ENCODE measurements at regions of chr3 and their contacts with region 1.

Region 1: GRCh38 chr3:181326637-181327223 is 337.2 kb upstream of the DNAJC19 start:
- DNase-seq: no peak
- ATAC-seq: peak in 2 of 8 donors; percentile 42 to 46
- H3K4me3 ChIP-seq: no peak overlapping the region
- H3K27ac ChIP-seq: no peak overlapping the region
- H3K4me1 ChIP-seq: no peaks in the 10 kb centered on the region
- H3K27me3 ChIP-seq: peaks cover 0 to 3% (median 0%) of the 10 kb centered on the region in 7 donors
- CTCF ChIP-seq: peak; percentile 26 to 73 (median 62)

Region 2: DNA sequence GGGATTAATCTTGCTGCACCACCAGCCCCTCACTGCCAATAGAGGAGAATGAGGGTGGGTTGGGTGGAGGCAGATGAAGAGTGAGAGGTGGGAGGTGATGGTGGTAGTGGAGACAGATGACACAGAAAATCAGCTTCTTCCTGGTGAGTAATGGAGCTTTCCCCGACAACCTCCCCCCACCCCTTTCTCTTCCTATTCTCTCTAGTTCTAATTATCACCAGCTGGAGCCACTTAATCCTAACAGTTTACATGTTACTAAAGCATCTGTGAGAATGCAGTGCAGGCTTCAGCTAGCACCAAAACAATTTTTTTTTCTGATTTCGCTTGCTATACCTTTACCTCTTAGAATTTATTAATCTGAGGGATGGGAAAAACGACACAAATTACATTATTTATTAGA is 221.1 kb before region 1 on chr3:
- intact Hi-C with region 1: no loop called
- DNase-seq: no peak
- ATAC-seq: no peak
- H3K4me3 ChIP-seq: no peak overlapping the region
- H3K27ac ChIP-seq: no peak overlapping the region
- H3K4me1 ChIP-seq: no peaks in the 10 kb centered on the region
- H3K27me3 ChIP-seq: no peaks in the 10 kb centered on the region
- CTCF ChIP-seq: no peak

Region 3: GRCh38 chr3:181176601-181177000 is 150.1 kb before region 1 on chr3:
- intact Hi-C with region 1: no loop called
- DNase-seq: peak; percentile 34 to 49
- ATAC-seq: peak in 1 of 8 donors; percentile 48
- H3K4me3 ChIP-seq: no peak overlapping the region
- H3K27ac ChIP-seq: no peak overlapping the region
- H3K4me1 ChIP-seq: no peaks in the 10 kb centered on the region
- H3K27me3 ChIP-seq: no peaks in the 10 kb centered on the region
- CTCF ChIP-seq: peak in 8 of 9 donors; percentile 40 to 70 (median 62)

Region 4: GRCh38 chr3:181457190-181457589 is 130.5 kb after region 1 on chr3:
- intact Hi-C with region 1: no loop called
- DNase-seq: no peak
- ATAC-seq: no peak
- H3K4me3 ChIP-seq: no peak overlapping the region
- H3K27ac ChIP-seq: no peak overlapping the region
- H3K4me1 ChIP-seq: no peaks in the 10 kb centered on the region
- H3K27me3 ChIP-seq: no peaks in the 10 kb centered on the region
- CTCF ChIP-seq: no peak

Region 5: DNA sequence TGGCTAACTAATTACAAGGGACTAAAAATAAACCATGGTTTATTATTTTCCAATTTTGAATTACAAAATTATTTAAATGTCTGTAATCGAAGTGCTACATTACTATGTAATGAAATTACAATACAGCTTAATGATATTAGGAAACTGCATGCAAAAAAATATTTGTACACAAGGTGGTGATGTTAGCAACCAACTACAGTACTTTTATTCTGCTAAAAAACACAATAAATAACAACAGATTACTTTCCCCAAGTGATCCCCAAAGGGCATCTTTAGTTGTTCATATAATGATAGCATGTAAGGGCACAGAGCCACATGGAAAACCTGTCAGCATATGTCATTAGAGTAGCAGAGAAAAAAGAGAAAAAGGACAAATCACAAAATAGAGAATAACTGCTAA is 237.5 kb after region 1 on chr3:
- intact Hi-C with region 1: loop called in 1 of 10 experiments (anchors 5 kb)
- DNase-seq: no peak
- ATAC-seq: no peak
- H3K4me3 ChIP-seq: no peak overlapping the region
- H3K27ac ChIP-seq: no peak overlapping the region
- H3K4me1 ChIP-seq: peaks cover 0 to 6% (median 0%) of the 10 kb centered on the region in 9 donors
- H3K27me3 ChIP-seq: no peaks in the 10 kb centered on the region
- CTCF ChIP-seq: no peak

Region 6: GRCh38 chr3:181694805-181695660 is 368.3 kb after region 1 on chr3:
- intact Hi-C with region 1: loop called (anchors 1 to 10 kb)
- DNase-seq: peak; percentile 27 to 48
- ATAC-seq: peak; percentile 75 to 93 (median 87)
- H3K4me3 ChIP-seq: peak overlapping the region; percentile 21 to 53 (median 46)
- H3K27ac ChIP-seq: peak overlapping the region in 3 of 10 donors; percentile 6 to 28 (median 19)
- H3K4me1 ChIP-seq: peaks cover 6 to 19% (median 16%) of the 10 kb centered on the region in 9 donors
- H3K27me3 ChIP-seq: peaks cover 11 to 74% (median 53%) of the 10 kb centered on the region in 7 donors
- CTCF ChIP-seq: peak in 6 of 9 donors; percentile 14 to 47 (median 34)

Region 7: GRCh38 chr3:181700168-181701087 is 373.7 kb after region 1 on chr3:
- intact Hi-C with region 1: loop called (anchors 1 to 10 kb)
- DNase-seq: peak; percentile 24 to 65
- ATAC-seq: peak in 7 of 8 donors; percentile 70 to 80 (median 77)
- H3K4me3 ChIP-seq: peak overlapping the region in 3 of 10 donors; percentile 3 to 25 (median 16)
- H3K27ac ChIP-seq: no peak overlapping the region
- H3K4me1 ChIP-seq: peaks cover 6 to 38% (median 18%) of the 10 kb centered on the region in 9 donors
- H3K27me3 ChIP-seq: peaks cover 39 to 99% (median 99%) of the 10 kb centered on the region in 7 donors
- CTCF ChIP-seq: peak; percentile 61 to 86 (median 84)

Measured in heart right ventricle (tissue), 16 donors.